ENCODE measurements at regions of chr19 and their contacts with region 1.

Region 1: DNA sequence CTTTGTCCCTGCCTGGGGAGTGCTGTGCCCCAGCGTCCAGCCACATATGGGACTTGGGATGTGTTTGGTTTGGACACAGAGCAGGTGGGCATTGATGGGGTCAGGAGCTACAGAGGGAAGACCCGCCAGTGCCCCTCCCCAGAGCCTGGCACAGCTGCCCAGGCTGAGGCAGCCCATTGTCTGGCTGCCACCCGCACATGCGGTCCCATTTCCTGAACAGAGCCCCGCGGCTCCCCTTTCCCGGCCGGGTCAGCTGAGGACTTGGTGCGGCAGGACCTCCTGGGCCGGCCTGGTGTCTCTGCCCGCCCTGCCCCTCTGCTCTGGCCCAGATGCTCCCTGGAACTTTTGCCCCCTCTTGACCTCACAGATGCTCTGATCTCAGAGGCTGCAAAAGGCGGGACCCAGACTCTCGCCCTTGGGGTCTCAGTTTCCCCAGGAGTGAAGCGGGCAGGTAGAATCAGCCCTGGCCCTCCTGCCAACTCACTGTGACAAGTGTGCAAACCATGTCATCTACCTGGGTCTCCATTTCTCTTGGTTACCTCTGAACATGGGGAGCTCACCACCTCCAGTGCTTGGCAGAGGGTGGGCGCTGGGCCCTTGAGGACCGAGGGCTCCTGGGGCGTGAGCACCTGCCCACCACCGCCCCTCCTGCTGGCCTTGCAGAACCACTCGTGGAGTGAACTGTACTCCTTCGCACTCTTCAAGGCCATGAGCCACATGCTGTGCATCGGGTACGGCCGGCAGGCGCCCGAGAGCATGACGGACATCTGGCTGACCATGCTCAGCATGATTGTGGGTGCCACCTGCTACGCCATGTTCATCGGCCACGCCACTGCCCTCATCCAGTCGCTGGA is 17.8 kb downstream of the HCN2 start:
- DNase-seq: no peak
- H3K4me3 ChIP-seq: no peak overlapping the region
- H3K27ac ChIP-seq: no peak overlapping the region
- H3K4me1 ChIP-seq: peaks cover 5 to 35% of the 10 kb centered on the region in 2 experiments; a peak in 3 of 4 replicates
- H3K27me3 ChIP-seq: no peaks in the 10 kb centered on the region
- CTCF ChIP-seq: no peak
- EP300 ChIP-seq: no peak
- RAD21 ChIP-seq: no peak

Region 2: GRCh38 chr19:628159-628558 is 20.6 kb after region 1 on chr19:
- CTCF ChIA-PET with region 1: interaction called, 10 read pairs
- POLR2A ChIA-PET with region 1: no interaction called
- DNase-seq: peak; percentile 76
- H3K4me3 ChIP-seq: no peak overlapping the region; a peak in 1 of 4 replicates
- H3K27ac ChIP-seq: no peak overlapping the region
- H3K4me1 ChIP-seq: peaks cover 0 to 16% of the 10 kb centered on the region in 2 experiments; a peak in 1 of 4 replicates
- H3K27me3 ChIP-seq: no peaks in the 10 kb centered on the region
- CTCF ChIP-seq: peak; percentile 54
- EP300 ChIP-seq: no peak
- RAD21 ChIP-seq: peak; percentile 39

Region 3: GRCh38 chr19:695352-695949 is 87.9 kb after region 1 on chr19 and contains the start of gene PRSS57:
- CTCF ChIA-PET with region 1: no interaction called
- POLR2A ChIA-PET with region 1: no interaction called
- DNase-seq: no peak
- H3K4me3 ChIP-seq: no peak within 1 kb of the TSS
- H3K27ac ChIP-seq: no peak within 1 kb of the TSS
- H3K4me1 ChIP-seq: no peaks in the 10 kb centered on the region
- H3K27me3 ChIP-seq: no peaks in the 10 kb centered on the region
- CTCF ChIP-seq: no peak
- EP300 ChIP-seq: no peak
- RAD21 ChIP-seq: no peak
- polyA plus RNA-seq, gene PRSS57: not detected in 2 replicates